Activated CD4-positive, alpha-beta T cell treated with anti-CD3 and anti-CD28 coated beads, Interleukin-2, amount 10 ng/mL, durations not matched to agents 24 days and 14 days (primary cell): ENCODE measurements at regions of chr9 and their contacts with region 1.

Region 1: GRCh38 chr9:96418074-96418809 is at the start of gene ZNF367:
- DNase-seq: peak; percentile 98
- H3K4me3 Mint-ChIP-seq: peak within 1 kb of the TSS; percentile 97
- H3K27ac Mint-ChIP-seq: peak within 1 kb of the TSS; percentile 95
- H3K4me1 Mint-ChIP-seq: peaks cover 38% of the 10 kb centered on the region
- H3K27me3 Mint-ChIP-seq: no peaks in the 10 kb centered on the region
- total RNA-seq, gene ZNF367: 21.7 and 22.1 TPM in 2 replicates

Region 2: GRCh38 chr9:96327694-96328352 is 90.4 kb before region 1 on chr9:
- intact Hi-C with region 1: loop called (anchors 10 kb)
- DNase-seq: peak; percentile 86
- H3K4me3 Mint-ChIP-seq: no peak overlapping the region
- H3K27ac Mint-ChIP-seq: no peak overlapping the region
- H3K4me1 Mint-ChIP-seq: no peaks in the 10 kb centered on the region
- H3K27me3 Mint-ChIP-seq: peaks cover 2% of the 10 kb centered on the region

Region 3: DNA sequence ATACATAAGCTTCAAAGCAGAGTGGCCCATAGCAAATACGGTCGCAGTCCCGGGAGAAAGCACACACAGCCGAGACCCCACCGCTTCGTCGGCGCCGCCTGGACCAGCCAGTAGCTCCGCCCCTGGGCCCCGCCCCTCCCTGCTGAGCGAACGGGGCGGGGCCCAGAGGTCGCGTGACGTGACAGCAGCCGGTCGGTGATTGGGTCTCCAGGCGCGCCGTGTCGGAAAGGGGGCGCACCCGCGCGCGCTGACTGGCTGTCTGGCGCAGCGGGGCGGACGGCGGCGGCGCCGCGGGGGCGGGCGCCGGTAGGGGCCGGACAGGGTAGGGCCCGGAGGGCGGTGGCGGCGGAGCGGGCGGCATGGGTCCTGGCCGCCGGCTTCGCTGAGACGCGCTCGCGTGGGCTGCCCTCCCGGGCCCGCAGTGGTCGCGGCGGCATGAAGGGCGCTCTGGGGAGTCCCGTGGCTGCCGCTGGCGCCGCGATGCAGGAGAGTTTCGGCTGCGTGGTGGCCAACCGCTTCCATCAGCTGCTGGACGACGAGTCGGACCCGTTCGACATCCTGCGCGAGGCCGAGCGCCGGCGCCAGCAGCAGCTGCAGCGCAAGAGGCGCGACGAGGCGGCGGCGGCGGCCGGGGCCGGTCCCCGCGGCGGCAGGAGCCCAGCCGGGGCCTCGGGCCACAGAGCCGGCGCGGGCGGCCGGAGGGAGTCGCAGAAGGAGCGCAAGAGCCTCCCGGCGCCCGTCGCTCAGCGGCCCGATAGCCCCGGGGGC is 31.8 kb after region 1 on chr9 and contains the start of gene HABP4:
- intact Hi-C with region 1: loop called (anchors 1 kb)
- DNase-seq: peak; percentile 99
- H3K4me3 Mint-ChIP-seq: peak within 1 kb of the TSS; percentile 89
- H3K27ac Mint-ChIP-seq: peak within 1 kb of the TSS; percentile 56
- H3K4me1 Mint-ChIP-seq: peaks cover 18% of the 10 kb centered on the region
- H3K27me3 Mint-ChIP-seq: peaks cover 29% of the 10 kb centered on the region
- total RNA-seq, gene HABP4: 8.8 and 9.1 TPM in 2 replicates

Region 4: DNA sequence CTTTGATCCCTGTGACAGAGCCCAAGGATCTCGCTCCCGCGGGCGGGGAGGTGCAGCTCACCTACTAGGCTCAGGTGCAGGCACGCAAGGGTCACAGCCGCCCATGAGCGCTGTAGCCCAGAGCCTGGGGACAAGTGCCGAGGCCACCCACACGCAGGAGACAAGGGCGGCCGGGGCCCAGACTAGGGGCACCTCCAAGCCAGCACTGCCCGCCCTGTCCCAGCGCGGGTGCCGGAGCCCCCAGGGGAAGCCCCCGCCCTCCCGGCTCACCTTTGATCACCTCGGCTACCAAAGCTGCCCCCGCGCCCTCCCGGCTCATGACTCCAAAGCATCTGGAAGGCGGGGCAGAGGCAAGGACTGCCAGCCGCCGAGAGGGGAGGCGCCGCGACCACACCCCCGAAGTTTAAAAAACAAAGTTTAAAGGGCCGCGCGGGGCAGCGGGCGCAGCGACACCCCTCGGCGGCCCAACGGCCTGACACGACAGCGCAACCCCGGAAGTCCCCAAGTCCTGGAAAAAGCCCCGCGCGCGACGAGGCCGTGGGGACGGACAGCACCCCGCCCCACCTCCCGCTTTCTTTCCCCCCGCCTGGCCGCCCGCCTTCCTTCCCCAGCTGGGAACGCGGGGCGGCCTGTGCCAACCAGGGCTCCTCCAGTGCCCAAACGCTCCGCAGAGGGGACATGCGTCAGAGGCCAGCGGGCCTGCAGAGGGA is 148.4 kb after region 1 on chr9:
- intact Hi-C with region 1: loop called (anchors 1 kb)
- DNase-seq: peak; percentile 93
- H3K4me3 Mint-ChIP-seq: peak overlapping the region; percentile 83
- H3K27ac Mint-ChIP-seq: peak overlapping the region; percentile 68
- H3K4me1 Mint-ChIP-seq: peaks cover 20% of the 10 kb centered on the region
- H3K27me3 Mint-ChIP-seq: peaks cover 31% of the 10 kb centered on the region

Region 5: DNA sequence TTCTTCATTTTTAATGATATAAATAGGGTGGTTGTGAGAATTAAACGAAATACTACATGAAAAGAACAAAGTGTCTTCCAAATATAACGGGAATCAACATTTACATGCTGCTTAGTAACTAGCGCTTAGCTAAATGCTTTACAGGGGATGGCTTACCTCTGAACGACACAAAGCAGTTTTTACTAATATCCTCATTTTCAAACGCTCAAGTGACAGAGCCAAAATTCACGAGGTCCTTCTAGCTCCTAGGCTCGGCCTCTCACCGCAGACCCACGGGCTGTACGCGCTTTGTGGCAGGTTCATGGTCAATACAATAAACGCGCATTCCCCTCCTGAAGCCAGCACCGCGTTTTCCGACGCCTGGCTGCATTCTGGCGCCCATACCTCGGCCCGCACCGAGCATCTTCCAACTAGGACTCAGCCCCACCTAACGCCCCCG is 359.2 kb after region 1 on chr9:
- intact Hi-C with region 1: loop called (anchors 2 kb)
- DNase-seq: no peak
- H3K4me3 Mint-ChIP-seq: peak overlapping the region; percentile 97
- H3K27ac Mint-ChIP-seq: peak overlapping the region; percentile 95
- H3K4me1 Mint-ChIP-seq: peaks cover 18% of the 10 kb centered on the region
- H3K27me3 Mint-ChIP-seq: no peaks in the 10 kb centered on the region